ENCODE measurements at regions of chr7 and their contacts with region 1.

Region 1: DNA sequence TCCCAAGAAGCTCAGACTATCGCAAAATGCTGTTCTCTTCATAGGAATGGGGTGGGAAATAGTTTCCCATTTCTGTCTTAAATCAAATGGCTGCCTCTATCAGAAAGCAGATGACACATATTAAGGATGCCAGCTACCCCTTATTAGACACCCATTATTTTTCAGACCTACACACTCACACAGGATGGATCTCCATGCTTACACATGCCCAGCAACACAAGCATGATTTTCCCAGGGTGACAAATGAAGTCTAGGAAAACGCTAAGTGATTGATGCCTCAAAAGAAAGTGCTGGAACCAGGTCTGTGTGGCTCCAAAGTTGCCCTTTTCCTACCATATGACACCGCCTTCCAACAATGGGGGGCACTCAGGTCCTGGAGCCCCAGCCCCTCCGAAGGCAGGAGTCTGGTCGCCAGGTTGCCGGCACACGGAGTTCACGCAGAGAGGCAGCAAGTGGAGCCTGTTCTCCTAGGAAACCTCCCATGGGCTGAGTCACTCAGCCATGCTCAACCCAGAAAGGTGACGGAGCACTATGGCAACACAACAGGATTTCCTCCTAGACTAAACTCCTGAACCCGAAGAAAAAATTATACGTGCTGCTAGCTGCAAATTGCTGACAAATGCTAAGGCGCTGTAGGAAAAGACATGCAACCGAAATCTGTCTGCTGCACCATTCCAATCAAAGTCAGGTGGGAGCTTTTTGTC is 19.8 kb downstream of the VOPP1 start:
- DNase-seq: no peak
- ATAC-seq: no peak
- H3K4me3 ChIP-seq: no peak overlapping the region
- H3K27ac ChIP-seq: no peak overlapping the region
- H3K4me1 ChIP-seq: peaks cover 94% of the 10 kb centered on the region
- H3K27me3 ChIP-seq: no peaks in the 10 kb centered on the region
- CTCF ChIP-seq: no peak
- EP300 ChIP-seq: no peak
- POLR2A ChIP-seq: no peak
- RAD21 ChIP-seq: no peak

Region 2: DNA sequence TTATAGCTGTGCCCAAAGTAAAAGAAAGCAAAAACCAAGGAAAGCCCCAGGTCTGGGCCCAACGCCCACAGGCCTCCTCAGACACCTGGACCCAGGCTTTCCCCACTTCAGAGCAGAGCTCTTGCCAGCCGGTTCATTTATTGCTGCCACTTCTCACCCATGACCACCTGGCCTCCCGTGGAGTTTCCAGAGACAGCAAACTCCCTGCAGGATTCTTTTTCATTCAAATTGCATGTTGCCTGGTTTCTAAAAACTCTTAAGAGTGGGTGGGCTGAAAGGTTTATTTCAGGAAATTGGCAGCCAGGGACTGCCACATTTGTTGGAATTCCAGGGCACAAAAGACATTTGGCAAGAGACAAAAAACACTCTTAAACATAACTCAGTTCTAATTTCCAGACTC is 15.1 kb after region 1 on chr7:
- CTCF ChIA-PET with region 1: interaction called, 35 read pairs
- POLR2A ChIA-PET with region 1: interaction called, 35 read pairs
- RAD21 ChIA-PET with region 1: interaction called, 87 read pairs
- SMC1A ChIA-PET with region 1: interaction called, 139 read pairs
- in situ Hi-C with region 1: no loop called
- intact Hi-C with region 1: loop called (anchors 1 kb)
- DNase-seq: no peak
- ATAC-seq: peak; percentile 16
- H3K4me3 ChIP-seq: peak overlapping the region; percentile 60
- H3K27ac ChIP-seq: peak overlapping the region; percentile 72
- H3K4me1 ChIP-seq: peaks cover 44% of the 10 kb centered on the region
- H3K27me3 ChIP-seq: no peaks in the 10 kb centered on the region
- CTCF ChIP-seq: no peak
- EP300 ChIP-seq: no peak
- POLR2A ChIP-seq: no peak
- RAD21 ChIP-seq: no peak